Naive thymus-derived CD4-positive, alpha-beta T cell (primary cell): ENCODE measurements at regions of chr13 and their contacts with region 1.

Region 1: GRCh38 chr13:40770934-40771618 is at the start of gene MRPS31:
- DNase-seq: peak; percentile 89 to 97 (median 93)
- ATAC-seq: peak; percentile 99
- H3K4me3 ChIP-seq: peak within 1 kb of the TSS; percentile 78
- H3K4me3 Mint-ChIP-seq: peak within 1 kb of the TSS; percentile 94 to 100 (median 99)
- H3K27ac ChIP-seq: peak within 1 kb of the TSS; percentile 89
- H3K27ac Mint-ChIP-seq: peak within 1 kb of the TSS; percentile 93 to 100 (median 98)
- H3K4me1 ChIP-seq: peaks cover 15 to 16% of the 10 kb centered on the region in 2 donors
- H3K4me1 Mint-ChIP-seq: peaks cover 16 to 41% (median 33%) of the 10 kb centered on the region in 7 donors
- H3K27me3 ChIP-seq: no peaks in the 10 kb centered on the region
- H3K27me3 Mint-ChIP-seq: no peaks in the 10 kb centered on the region
- total RNA-seq, gene MRPS31: 15.8 to 39.9 (median 34.7) TPM

Region 2: GRCh38 chr13:39037880-39038568 is 1733.1 kb before region 1 on chr13 and contains the starts of genes NHLRC3 and PROSER1:
- CTCF ChIA-PET with region 1: no interaction called
- POLR2A ChIA-PET with region 1: no interaction called
- intact Hi-C with region 1: loop called (anchors 5 to 10 kb)
- DNase-seq: peak; percentile 60 to 86 (median 78)
- ATAC-seq: peak; percentile 87
- H3K4me3 ChIP-seq: peak within 1 kb of the TSS; percentile 95
- H3K4me3 Mint-ChIP-seq: peak within 1 kb of the TSS; percentile 92 to 99 (median 96)
- H3K27ac ChIP-seq: peak within 1 kb of the TSS; percentile 82
- H3K27ac Mint-ChIP-seq: peak within 1 kb of the TSS; percentile 92 to 97 (median 95)
- H3K4me1 ChIP-seq: peaks cover 7 to 28% of the 10 kb centered on the region in 2 donors
- H3K4me1 Mint-ChIP-seq: peaks cover 36 to 78% (median 65%) of the 10 kb centered on the region in 7 donors
- H3K27me3 ChIP-seq: no peaks in the 10 kb centered on the region
- H3K27me3 Mint-ChIP-seq: no peaks in the 10 kb centered on the region
- total RNA-seq, gene NHLRC3: 13.0 to 30.6 (median 23.6) TPM
- total RNA-seq, gene PROSER1: 36.1 to 65.7 (median 47.3) TPM

Region 3: DNA sequence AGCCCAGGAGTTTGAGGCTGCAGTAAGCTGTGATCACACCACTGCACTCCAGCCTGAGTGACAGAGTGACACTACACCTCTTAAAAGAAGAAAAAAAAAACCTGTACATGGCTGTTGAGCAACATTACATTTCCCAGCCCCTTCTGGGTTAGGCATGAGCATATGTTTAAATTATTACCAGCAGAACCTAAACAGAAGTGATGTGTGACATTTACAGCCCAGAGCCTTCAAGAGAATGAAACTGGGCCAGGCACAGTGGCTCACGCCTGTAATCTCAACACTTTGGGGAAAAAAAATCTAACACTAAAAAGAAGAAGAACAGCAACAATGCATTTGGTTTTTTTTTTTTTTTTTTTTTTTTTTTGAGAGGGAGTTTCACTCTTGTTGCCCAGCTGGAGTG is 38.4 kb before region 1 on chr13:
- CTCF ChIA-PET with region 1: no interaction called
- POLR2A ChIA-PET with region 1: no interaction called
- intact Hi-C with region 1: no loop called
- DNase-seq: no peak
- ATAC-seq: peak; percentile 10
- H3K4me3 ChIP-seq: no peak overlapping the region
- H3K4me3 Mint-ChIP-seq: no peak overlapping the region
- H3K27ac ChIP-seq: no peak overlapping the region
- H3K27ac Mint-ChIP-seq: peak overlapping the region in 4 of 9 donors; percentile 4 to 74 (median 26)
- H3K4me1 ChIP-seq: no peaks in the 10 kb centered on the region
- H3K4me1 Mint-ChIP-seq: peaks cover 10 to 33% (median 22%) of the 10 kb centered on the region in 7 donors
- H3K27me3 ChIP-seq: no peaks in the 10 kb centered on the region
- H3K27me3 Mint-ChIP-seq: no peaks in the 10 kb centered on the region

Region 4: DNA sequence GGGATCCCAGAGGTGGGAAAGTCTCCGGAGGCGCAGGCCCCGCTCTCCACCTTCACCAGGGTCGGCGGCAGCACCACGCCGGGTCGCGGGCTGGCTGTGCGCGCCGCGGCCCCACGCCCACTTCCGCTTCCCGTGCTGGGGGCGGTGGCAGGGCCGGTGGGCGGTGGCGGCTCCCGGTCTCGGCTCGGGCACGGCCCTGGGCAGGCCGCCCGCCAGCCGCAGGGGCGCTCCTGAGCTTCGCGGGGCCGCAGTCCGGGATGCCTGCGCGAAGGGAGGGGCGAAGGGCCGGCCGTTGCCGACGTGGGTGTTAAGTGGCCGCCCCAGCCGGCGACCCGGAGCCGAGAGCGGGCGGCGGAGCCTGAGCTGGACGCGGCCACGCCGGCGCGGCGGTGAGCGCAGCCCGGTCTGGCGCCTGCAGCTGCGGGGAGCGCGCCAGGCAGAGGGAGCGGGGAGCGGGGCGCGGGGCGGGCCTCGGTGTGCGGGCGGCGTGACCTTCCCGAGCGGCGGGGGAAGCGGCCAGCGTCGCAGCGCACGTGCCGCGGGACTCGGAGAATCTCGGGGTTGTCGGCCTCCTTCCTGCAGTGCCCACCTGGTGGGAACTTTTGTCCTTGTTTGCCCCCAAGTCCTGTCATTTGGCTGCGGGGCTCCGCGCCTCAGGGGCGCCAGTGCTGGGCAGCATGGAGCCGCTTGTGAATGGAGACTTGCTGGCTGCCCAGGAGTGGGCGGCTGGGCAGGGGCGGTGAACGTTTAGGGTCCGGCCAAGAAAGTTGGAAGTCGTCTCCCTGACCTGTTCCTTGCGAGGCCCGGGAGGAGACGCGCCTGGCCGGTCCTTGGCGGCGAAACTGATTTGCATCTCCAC is 18.4 kb after region 1 on chr13 and contains the start of gene SLC25A15:
- CTCF ChIA-PET with region 1: interaction called, 3 read pairs
- POLR2A ChIA-PET with region 1: interaction called, 6 read pairs
- intact Hi-C with region 1: loop called (anchors 1 to 2 kb)
- DNase-seq: peak; percentile 57 to 84 (median 72)
- ATAC-seq: peak; percentile 93
- H3K4me3 ChIP-seq: peak within 1 kb of the TSS; percentile 62
- H3K4me3 Mint-ChIP-seq: peak within 1 kb of the TSS; percentile 73 to 91 (median 82)
- H3K27ac ChIP-seq: peak within 1 kb of the TSS; percentile 75
- H3K27ac Mint-ChIP-seq: peak within 1 kb of the TSS; percentile 71 to 95 (median 82)
- H3K4me1 ChIP-seq: peaks cover 3 to 4% of the 10 kb centered on the region in 2 donors
- H3K4me1 Mint-ChIP-seq: peaks cover 11 to 42% (median 34%) of the 10 kb centered on the region in 7 donors
- H3K27me3 ChIP-seq: no peaks in the 10 kb centered on the region
- H3K27me3 Mint-ChIP-seq: no peaks in the 10 kb centered on the region
- total RNA-seq, gene SLC25A15: 4.3 to 11.8 (median 9.4) TPM

Region 5: GRCh38 chr13:41132512-41133152 is 361.6 kb after region 1 on chr13 and contains the start of gene KBTBD6:
- CTCF ChIA-PET with region 1: no interaction called
- POLR2A ChIA-PET with region 1: no interaction called
- intact Hi-C with region 1: loop called (anchors 1 kb)
- DNase-seq: peak; percentile 76 to 93 (median 87)
- ATAC-seq: peak; percentile 98
- H3K4me3 ChIP-seq: peak within 1 kb of the TSS; percentile 77
- H3K4me3 Mint-ChIP-seq: peak within 1 kb of the TSS; percentile 94 to 99 (median 98)
- H3K27ac ChIP-seq: peak within 1 kb of the TSS; percentile 67
- H3K27ac Mint-ChIP-seq: peak within 1 kb of the TSS; percentile 91 to 97 (median 93)
- H3K4me1 ChIP-seq: peaks cover 15 to 24% of the 10 kb centered on the region in 2 donors
- H3K4me1 Mint-ChIP-seq: peaks cover 32 to 60% (median 54%) of the 10 kb centered on the region in 7 donors
- H3K27me3 ChIP-seq: no peaks in the 10 kb centered on the region
- H3K27me3 Mint-ChIP-seq: no peaks in the 10 kb centered on the region
- total RNA-seq, gene KBTBD6: 3.9 to 9.2 (median 7.7) TPM

Region 6: DNA sequence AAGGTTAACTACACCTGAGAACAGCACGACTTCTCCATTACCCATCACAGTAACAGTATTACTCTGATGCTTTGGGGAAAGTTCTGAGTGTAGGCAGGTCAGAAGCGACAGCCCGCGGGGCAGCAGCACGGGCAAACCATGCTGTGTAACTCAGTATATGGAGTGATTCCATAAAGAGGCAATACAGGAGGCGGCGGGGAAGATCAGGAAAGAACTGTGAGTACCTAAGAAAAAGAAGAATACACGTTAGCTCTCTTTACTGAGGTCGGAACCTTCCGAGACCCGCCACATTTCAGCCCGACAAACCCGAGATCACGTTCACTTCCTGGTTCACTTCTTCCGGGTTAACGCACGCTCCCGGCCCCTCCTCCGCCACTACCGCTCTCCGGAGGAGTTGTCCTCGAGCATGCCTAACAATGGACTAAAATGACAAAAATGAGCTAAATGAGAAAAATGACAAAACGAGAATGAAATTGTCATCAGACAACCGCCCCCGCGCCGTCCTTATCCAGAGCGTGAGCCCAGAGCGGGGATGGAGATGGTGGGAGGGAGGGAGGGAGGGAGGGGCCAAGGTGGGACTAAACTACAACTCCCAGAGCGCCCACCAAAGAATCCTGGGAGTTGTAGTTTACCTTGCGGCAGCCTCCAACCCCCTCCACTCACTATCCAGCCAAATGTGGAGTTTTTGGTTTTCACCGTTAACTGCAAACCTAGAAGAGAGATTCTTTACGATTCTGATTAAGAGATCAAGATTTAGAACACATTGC is 492.4 kb after region 1 on chr13 and contains the start of gene MTRF1:
- CTCF ChIA-PET with region 1: no interaction called
- POLR2A ChIA-PET with region 1: no interaction called
- intact Hi-C with region 1: loop called in 1 of 2 experiments (anchors 1 kb)
- DNase-seq: peak; percentile 70 to 91 (median 88)
- ATAC-seq: peak; percentile 94
- H3K4me3 ChIP-seq: peak within 1 kb of the TSS; percentile 76
- H3K4me3 Mint-ChIP-seq: peak within 1 kb of the TSS; percentile 84 to 100 (median 96)
- H3K27ac ChIP-seq: peak within 1 kb of the TSS; percentile 79
- H3K27ac Mint-ChIP-seq: peak within 1 kb of the TSS; percentile 92 to 99 (median 96)
- H3K4me1 ChIP-seq: peaks cover 0 to 3% of the 10 kb centered on the region in 2 donors
- H3K4me1 Mint-ChIP-seq: peaks cover 10 to 61% (median 28%) of the 10 kb centered on the region in 7 donors
- H3K27me3 ChIP-seq: no peaks in the 10 kb centered on the region
- H3K27me3 Mint-ChIP-seq: no peaks in the 10 kb centered on the region
- total RNA-seq, gene MTRF1: 21.7 to 38.2 (median 30.9) TPM

Region 7: DNA sequence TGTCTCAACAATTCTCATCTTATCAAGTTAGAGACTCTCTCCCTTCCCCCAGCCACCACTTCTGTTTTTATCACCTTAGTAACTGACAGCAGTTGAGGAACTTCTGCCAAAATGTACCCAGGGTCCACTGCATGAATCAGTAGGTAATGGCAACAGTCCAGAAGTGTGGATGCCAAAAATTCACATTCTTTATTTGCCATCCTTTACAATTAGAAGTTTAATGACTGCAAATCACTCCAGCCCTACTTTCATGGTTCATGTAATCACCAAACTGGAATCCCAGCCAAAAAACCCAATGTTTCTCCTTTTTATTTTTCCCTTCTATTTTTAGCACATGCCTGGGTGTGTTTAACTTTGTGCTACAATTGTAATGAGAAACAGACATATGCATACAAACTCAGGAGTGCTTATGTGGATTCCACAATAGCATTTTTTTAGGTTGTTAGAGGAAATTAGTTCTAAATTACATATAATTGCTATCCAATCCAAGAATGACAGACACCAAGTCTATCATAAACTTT is 929.8 kb after region 1 on chr13:
- CTCF ChIA-PET with region 1: no interaction called
- POLR2A ChIA-PET with region 1: no interaction called
- intact Hi-C with region 1: no loop called
- DNase-seq: no peak
- ATAC-seq: peak; percentile 34
- H3K4me3 ChIP-seq: no peak overlapping the region
- H3K4me3 Mint-ChIP-seq: no peak overlapping the region
- H3K27ac ChIP-seq: no peak overlapping the region
- H3K27ac Mint-ChIP-seq: no peak overlapping the region
- H3K4me1 ChIP-seq: no peaks in the 10 kb centered on the region
- H3K4me1 Mint-ChIP-seq: peaks cover 0 to 6% (median 0%) of the 10 kb centered on the region in 7 donors
- H3K27me3 ChIP-seq: no peaks in the 10 kb centered on the region
- H3K27me3 Mint-ChIP-seq: no peaks in the 10 kb centered on the region

Region 8: DNA sequence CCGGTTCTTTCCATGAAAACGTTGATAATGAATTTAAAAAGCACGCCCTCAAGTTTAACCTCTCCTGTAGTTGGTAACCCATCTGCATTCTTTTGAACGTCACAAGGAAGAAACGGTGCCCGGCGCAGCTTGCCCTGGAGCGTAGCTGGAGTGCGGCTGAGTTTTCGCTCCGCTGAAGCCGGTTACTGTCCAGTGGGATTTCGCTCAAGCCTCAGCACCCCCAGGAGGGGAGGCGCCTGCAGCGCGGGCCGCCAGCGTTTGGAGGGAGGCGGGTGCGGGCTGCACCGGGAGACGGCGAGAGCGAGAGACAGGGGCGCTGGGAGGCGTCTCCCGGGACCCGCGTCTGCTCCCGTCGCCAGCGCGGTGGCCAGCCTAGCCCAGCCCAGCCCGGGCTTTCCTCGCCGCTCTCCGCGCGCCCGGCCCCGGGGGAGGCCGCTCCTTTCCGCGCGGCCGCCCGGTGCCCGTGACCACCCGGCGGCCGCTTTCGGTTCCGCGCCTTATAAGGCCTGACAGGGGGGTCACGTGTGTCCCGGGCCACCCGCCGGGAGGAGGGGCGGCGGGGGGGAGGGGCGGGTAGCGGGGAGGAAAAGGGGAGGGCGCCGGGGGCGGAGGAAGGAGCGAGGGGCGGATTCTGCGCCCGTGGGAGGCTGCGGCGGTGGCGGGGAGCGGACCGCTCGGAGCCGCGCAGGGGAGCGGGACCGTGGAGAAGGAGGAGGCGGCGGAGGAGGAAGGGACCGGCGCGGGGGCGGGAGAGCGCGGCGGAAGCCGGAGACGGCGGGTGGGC is 1269.1 kb after region 1 on chr13:
- CTCF ChIA-PET with region 1: no interaction called
- POLR2A ChIA-PET with region 1: no interaction called
- intact Hi-C with region 1: loop called in 1 of 2 experiments (anchors 10 kb)
- DNase-seq: peak; percentile 67 to 87 (median 79)
- ATAC-seq: peak; percentile 92
- H3K4me3 ChIP-seq: peak overlapping the region; percentile 70
- H3K4me3 Mint-ChIP-seq: peak overlapping the region; percentile 83 to 95 (median 90)
- H3K27ac ChIP-seq: peak overlapping the region; percentile 73
- H3K27ac Mint-ChIP-seq: peak overlapping the region; percentile 29 to 91 (median 84)
- H3K4me1 ChIP-seq: peaks cover 7 to 8% of the 10 kb centered on the region in 2 donors
- H3K4me1 Mint-ChIP-seq: peaks cover 7 to 22% (median 20%) of the 10 kb centered on the region in 7 donors
- H3K27me3 ChIP-seq: no peaks in the 10 kb centered on the region
- H3K27me3 Mint-ChIP-seq: peaks cover 0 to 58% (median 0%) of the 10 kb centered on the region in 5 donors